Activated T-helper 1 cell treated with anti-CD3 and anti-CD28 coated beads, Interleukin-12 subunit alpha, Interleukin-12 subunit beta, Interleukin-2, Interleukin-4 antibody, amounts not matched to agents 30 ng/mL and 10 ng/mL and 1 ng/mL, durations not matched to agents 14 hours and 24 hours and 36 hours (primary cell): ENCODE measurements at regions of chr7 and their contacts with region 1.

Region 1: DNA sequence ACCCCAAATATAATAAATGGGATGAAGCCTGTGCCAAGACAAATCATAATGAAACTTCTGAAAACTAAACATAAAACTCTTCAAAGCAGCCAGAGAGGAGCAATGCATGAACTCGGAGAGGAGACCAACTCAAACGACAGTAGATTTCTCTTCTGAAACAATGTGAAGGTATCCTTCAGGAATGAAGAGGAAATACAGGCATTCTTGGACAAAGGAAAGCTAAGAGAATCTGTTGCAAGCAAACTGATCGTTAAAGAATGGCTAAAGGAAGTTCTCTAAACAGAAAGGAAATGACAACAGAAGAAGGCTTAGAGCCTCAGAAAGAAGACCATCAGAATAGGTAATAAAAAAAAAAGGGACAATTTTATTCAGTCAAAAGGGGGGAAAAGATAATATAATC is 6.6 kb downstream of the GNA12 start:
- DNase-seq: no peak
- H3K4me3 Mint-ChIP-seq: peak overlapping the region; percentile 53
- H3K27ac Mint-ChIP-seq: peak overlapping the region; percentile 18
- H3K4me1 Mint-ChIP-seq: peaks cover 52% of the 10 kb centered on the region
- H3K27me3 Mint-ChIP-seq: no peaks in the 10 kb centered on the region

Region 2: GRCh38 chr7:2821842-2822507 is 15.5 kb before region 1 on chr7:
- intact Hi-C with region 1: loop called (anchors 2 kb)
- DNase-seq: no peak
- H3K4me3 Mint-ChIP-seq: no peak overlapping the region
- H3K27ac Mint-ChIP-seq: no peak overlapping the region
- H3K4me1 Mint-ChIP-seq: peaks cover 54% of the 10 kb centered on the region
- H3K27me3 Mint-ChIP-seq: no peaks in the 10 kb centered on the region

Region 3: DNA sequence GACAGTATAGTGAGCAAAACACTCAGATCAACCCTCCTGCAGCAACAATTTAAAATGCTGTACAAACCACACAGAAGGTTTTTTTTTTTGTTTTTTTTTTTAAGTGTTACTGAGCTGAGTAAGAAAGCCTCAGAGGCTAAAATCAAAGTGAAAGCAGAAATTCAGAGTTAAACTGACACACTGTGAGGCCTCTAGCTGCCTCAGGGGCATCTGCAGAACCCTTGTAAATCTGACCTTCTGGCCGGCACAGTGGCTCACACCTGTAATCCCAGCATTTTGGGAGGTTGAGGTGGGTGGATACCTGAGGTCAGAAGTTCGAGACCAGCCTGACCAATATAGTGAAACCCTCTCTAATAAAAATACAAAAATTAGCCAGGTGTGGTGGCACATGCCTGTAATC is 14.0 kb after region 1 on chr7:
- intact Hi-C with region 1: loop called (anchors 1 kb)
- DNase-seq: no peak
- H3K4me3 Mint-ChIP-seq: no peak overlapping the region
- H3K27ac Mint-ChIP-seq: peak overlapping the region; percentile 74
- H3K4me1 Mint-ChIP-seq: peaks cover 7% of the 10 kb centered on the region
- H3K27me3 Mint-ChIP-seq: peaks cover 2% of the 10 kb centered on the region

Region 4: GRCh38 chr7:3229904-3230470 is 392.5 kb after region 1 on chr7:
- intact Hi-C with region 1: no loop called
- DNase-seq: no peak
- H3K4me3 Mint-ChIP-seq: no peak overlapping the region
- H3K27ac Mint-ChIP-seq: no peak overlapping the region
- H3K4me1 Mint-ChIP-seq: peaks cover 19% of the 10 kb centered on the region
- H3K27me3 Mint-ChIP-seq: no peaks in the 10 kb centered on the region

Region 5: DNA sequence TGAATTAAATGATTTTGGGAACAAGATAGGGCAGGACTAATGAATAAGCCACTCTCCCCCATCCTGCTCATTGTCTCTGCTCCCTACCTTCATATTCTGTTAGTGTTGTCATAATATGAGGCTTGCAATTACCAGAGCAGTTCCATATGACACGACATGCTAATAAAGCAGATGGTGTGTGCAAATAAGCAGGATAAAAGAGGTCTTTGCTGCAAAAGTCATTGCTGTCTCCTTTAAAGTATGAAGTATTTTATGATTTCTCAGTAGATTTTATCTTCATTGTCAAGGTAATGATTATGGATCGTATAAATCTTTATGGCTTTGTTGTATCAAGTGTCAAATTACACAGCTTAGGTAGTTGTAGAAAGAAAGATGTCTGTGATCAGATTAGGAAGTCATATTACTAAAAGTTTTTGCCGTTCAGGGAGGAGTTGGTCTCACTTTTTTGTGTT is 578.4 kb after region 1 on chr7:
- intact Hi-C with region 1: no loop called
- DNase-seq: no peak
- H3K4me3 Mint-ChIP-seq: no peak overlapping the region
- H3K27ac Mint-ChIP-seq: no peak overlapping the region
- H3K4me1 Mint-ChIP-seq: no peaks in the 10 kb centered on the region
- H3K27me3 Mint-ChIP-seq: peaks cover 21% of the 10 kb centered on the region